Activated B cell treated with CpG ODN at 0.5 μM for 24 hours (primary cell): ENCODE measurements at regions of chr4 and their contacts with region 1.

Region 1: DNA sequence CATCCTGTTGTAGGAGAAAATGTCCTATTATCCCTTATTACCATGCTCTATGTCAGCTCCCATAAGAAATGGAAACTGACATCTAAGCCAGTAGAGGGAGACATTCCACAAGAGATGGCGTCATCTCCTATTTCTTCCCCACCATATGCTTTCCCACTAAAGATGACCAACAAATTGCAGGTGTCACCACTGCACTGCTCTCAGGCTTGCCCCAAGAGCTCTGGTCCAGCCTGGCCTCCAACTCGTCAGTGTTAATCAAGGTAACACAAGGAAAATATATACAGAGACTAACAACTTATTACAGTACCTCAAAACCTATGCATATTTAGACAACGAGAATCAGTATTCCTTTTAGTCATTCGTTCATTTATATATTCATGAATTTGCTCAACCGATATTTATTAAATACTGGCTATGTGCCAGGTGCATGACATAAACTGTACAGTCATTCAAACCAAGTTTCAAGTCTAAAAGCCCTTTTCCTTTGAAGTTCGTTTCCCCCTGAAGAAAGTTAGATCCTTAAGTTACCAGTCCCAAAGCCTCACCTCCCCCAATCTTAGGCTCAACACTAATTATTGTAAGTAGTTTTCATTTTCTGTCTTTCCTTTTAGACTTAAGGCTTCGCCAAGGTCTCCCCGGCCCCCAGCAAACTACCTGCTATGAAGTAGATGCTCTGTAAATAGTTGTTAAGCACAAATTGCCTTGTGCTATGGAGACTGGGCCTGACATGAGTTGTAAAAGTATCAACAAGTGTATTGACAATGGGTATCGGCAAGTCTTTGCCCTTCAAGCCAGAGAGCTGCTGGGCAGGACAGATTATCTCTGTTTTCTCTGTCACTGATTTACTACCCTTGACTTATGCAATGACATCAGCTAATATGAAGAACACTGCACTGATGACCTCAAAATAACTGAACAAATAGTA is 3.1 kb upstream of the FGB start:
- DNase-seq: no peak
- ATAC-seq: no peak
- H3K4me3 Mint-ChIP-seq: no peak overlapping the region
- H3K27ac Mint-ChIP-seq: no peak overlapping the region
- H3K4me1 Mint-ChIP-seq: no peaks in the 10 kb centered on the region
- H3K27me3 Mint-ChIP-seq: peaks cover 7% of the 10 kb centered on the region
- CTCF ChIP-seq: no peak

Region 2: DNA sequence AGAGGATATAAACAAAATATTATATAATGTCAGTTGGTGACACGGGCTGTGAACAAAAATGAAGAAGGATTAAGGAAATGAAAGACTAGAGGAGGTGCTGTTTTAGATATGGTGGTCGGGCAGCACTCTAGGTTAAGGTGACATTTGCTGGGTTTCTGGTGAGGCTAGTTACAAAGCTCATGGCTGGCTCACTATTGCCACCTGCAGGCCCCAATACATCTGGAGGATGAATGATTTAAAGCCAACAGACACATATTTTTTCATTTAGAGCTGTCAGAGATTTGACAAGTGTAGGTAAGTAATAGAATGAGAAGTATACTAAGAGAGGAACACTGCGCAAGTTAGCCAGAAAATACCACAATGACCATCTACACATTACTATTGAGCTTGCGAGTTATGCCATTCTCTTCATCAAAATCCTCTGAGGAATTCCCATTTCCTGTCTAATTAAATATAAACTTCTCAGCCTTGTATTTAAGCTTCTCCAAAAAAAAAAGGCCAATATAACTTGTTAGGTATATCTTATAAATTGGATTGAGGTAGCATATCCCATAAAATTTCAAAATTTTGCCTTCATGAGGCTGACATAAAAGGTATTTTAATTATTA is 59.1 kb after region 1 on chr4:
- CTCF ChIA-PET with region 1: interaction called, 15 read pairs
- POLR2A ChIA-PET with region 1: no interaction called
- intact Hi-C with region 1: no loop called
- DNase-seq: peak; percentile 19
- ATAC-seq: peak; percentile 80
- H3K4me3 Mint-ChIP-seq: no peak overlapping the region
- H3K27ac Mint-ChIP-seq: no peak overlapping the region
- H3K4me1 Mint-ChIP-seq: peaks cover 15% of the 10 kb centered on the region
- H3K27me3 Mint-ChIP-seq: peaks cover 2% of the 10 kb centered on the region
- CTCF ChIP-seq: no peak

Region 3: GRCh38 chr4:154779362-154779947 is 219.7 kb after region 1 on chr4:
- CTCF ChIA-PET with region 1: no interaction called
- POLR2A ChIA-PET with region 1: no interaction called
- intact Hi-C with region 1: loop called (anchors 5 kb)
- DNase-seq: no peak
- ATAC-seq: no peak
- H3K4me3 Mint-ChIP-seq: no peak overlapping the region
- H3K27ac Mint-ChIP-seq: no peak overlapping the region
- H3K4me1 Mint-ChIP-seq: no peaks in the 10 kb centered on the region
- H3K27me3 Mint-ChIP-seq: peaks cover 9% of the 10 kb centered on the region
- CTCF ChIP-seq: no peak